ENCODE measurements at regions of chr1 and their contacts with region 1.

Region 1: GRCh38 chr1:94335950-94336349 is 82.2 kb upstream of the ABCD3 start:
- DNase-seq: peak; percentile 75 to 92 (median 80)
- H3K4me3 ChIP-seq: no peak overlapping the region
- H3K27ac ChIP-seq: no peak overlapping the region
- H3K4me1 ChIP-seq: no peaks in the 10 kb centered on the region
- H3K27me3 ChIP-seq: no peaks in the 10 kb centered on the region
- CTCF ChIP-seq: peak; percentile 62 to 98 (median 91)
- POLR2A ChIP-seq: no peak

Region 2: DNA sequence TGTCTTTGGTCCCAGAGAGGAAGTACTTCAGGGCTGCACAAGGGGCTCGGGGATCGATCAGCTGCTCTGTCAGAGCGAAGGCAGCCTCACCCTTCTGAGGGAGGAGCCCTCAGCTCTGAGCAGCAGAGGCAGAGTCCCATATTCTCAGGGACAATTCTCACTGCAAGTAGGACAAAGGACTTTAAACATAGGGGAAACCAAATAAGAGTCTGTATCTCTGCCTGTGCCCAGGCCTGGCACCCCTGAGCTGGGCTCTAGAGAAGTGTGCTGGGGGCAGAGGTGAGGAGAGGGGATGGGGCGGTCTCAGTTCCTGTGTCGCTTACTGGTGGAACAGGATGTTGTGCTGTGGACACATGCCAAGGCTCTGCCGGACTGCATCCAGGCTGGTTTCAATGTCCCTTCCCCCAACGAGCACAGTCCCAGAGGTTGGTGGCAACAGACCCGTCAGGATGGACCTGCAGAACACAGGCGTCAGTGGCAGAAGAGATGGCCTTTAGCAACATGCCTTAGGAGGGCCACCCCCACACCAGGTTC is 291.6 kb before region 1 on chr1:
- intact Hi-C with region 1: loop called (anchors 5 kb)
- DNase-seq: peak; percentile 43 to 88 (median 62)
- H3K4me3 ChIP-seq: no peak overlapping the region
- H3K27ac ChIP-seq: peak overlapping the region in 3 of 5 donors; percentile 35 to 85 (median 64)
- H3K4me1 ChIP-seq: peaks cover 0 to 3% of the 10 kb centered on the region in 2 donors
- H3K27me3 ChIP-seq: no peaks in the 10 kb centered on the region
- CTCF ChIP-seq: no peak
- POLR2A ChIP-seq: no peak

Region 3: GRCh38 chr1:94061513-94062443 is 274.2 kb before region 1 on chr1:
- intact Hi-C with region 1: loop called (anchors 2 to 5 kb)
- DNase-seq: peak; percentile 63 to 87 (median 72)
- H3K4me3 ChIP-seq: no peak overlapping the region
- H3K27ac ChIP-seq: peak overlapping the region in 1 of 5 donors; percentile 17
- H3K4me1 ChIP-seq: peaks cover 4 to 8% of the 10 kb centered on the region in 2 donors
- H3K27me3 ChIP-seq: no peaks in the 10 kb centered on the region
- CTCF ChIP-seq: peak; percentile 81 to 99 (median 94)
- POLR2A ChIP-seq: no peak

Region 4: DNA sequence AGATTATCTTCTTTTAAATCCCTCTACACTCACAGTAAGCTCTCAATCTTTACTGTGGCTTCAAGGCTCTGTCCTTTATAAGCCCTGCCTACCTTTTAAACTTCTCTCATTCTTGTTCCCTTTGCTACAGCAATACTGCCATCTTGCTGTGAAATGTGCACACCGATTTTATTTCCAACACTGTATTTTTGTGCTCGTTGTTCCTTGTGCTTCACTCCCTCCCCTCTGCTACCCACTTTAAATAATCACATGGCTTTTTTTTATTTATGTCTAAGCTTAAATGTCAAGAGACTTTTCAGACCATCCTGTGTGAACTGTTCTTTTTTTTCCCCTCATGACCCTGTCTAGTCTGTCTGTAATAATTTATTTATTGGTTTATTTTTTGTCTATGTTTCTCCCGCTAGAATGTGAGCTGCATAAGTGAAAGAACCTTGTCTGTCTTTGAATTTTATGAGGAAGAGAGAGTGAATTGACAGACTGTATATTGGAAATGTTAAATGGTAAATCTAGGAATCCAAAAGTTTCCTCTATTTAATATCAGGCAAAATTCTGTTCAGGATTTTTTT is 127.9 kb after region 1 on chr1:
- intact Hi-C with region 1: loop called in 1 of 2 experiments (anchors 10 kb)
- DNase-seq: peak in 5 of 7 donors; percentile 20 to 32 (median 20)
- H3K4me3 ChIP-seq: no peak overlapping the region
- H3K27ac ChIP-seq: peak overlapping the region in 2 of 5 donors; percentile 2 to 4
- H3K4me1 ChIP-seq: peaks cover 0 to 7% of the 10 kb centered on the region in 2 donors
- H3K27me3 ChIP-seq: no peaks in the 10 kb centered on the region
- CTCF ChIP-seq: peak; percentile 45 to 91 (median 68)
- POLR2A ChIP-seq: no peak